ENCODE measurements at regions of chr11 and their contacts with region 1.

Region 1: DNA sequence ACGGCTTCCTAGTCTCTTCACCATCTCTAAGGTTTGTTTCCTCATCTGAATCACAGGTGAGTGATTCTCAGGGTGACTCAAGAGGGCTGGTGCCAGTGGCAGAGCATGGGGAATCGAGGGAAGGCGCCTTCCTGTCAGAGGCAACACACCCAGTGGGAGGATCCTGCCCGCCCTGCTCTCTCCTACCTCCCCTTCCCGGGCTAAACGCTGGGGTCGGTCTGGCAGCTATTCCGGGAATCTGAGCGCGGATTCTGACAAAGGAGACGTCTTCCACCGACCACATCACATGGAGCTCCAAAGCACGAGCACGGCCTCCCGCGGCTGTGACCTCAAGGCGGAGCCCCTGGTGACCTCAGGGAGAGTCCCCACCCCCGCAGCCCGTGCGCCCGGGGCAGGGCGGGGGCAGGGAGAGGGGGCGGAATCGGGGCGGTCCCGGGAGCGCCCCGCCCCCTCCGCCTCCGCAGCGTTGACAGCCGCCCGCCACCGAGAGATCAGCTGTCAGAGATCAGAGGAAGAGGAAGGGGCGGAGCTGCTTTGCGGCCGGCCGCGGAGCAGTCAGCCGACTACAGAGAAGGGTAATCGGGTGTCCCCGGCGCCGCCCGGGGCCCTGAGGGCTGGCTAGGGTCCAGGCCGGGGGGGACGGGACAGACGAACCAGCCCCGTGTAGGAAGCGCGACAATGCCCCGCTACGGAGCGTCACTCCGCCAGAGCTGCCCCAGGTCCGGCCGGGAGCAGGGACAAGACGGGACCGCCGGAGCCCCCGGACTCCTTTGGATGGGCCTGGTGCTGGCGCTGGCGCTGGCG is at the start of gene SMPD1:
- DNase-seq: peak; percentile 92
- ATAC-seq: peak; percentile 86
- H3K4me3 Mint-ChIP-seq: peak within 1 kb of the TSS; percentile 96
- H3K27ac Mint-ChIP-seq: peak within 1 kb of the TSS; percentile 95
- H3K4me1 Mint-ChIP-seq: peaks cover 39% of the 10 kb centered on the region
- H3K27me3 Mint-ChIP-seq: no peaks in the 10 kb centered on the region
- total RNA-seq, gene SMPD1: 40.7 to 42.6 TPM

Region 2: DNA sequence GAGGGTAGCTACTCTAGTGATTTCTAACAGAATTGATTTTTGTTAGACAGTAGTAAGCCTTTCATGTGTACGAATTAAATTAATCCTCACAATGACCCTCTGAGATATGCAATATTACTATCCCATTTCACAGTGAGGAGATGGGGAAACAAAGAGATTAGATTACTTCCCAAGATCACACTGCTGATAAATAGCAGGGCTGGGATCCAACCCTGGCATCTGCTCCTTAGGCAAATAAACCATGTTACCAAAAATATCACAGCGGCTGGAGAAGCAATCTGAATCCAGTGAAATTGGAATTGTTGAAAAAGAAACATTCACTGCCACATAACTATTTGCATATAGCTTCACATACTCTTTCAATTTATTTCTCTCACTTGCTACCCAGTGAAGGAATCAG is 57.0 kb before region 1 on chr11:
- POLR2A ChIA-PET with region 1: no interaction called
- DNase-seq: no peak
- ATAC-seq: no peak
- H3K4me3 Mint-ChIP-seq: no peak overlapping the region
- H3K27ac Mint-ChIP-seq: no peak overlapping the region
- H3K4me1 Mint-ChIP-seq: no peaks in the 10 kb centered on the region
- H3K27me3 Mint-ChIP-seq: peaks cover 32% of the 10 kb centered on the region

Region 3: DNA sequence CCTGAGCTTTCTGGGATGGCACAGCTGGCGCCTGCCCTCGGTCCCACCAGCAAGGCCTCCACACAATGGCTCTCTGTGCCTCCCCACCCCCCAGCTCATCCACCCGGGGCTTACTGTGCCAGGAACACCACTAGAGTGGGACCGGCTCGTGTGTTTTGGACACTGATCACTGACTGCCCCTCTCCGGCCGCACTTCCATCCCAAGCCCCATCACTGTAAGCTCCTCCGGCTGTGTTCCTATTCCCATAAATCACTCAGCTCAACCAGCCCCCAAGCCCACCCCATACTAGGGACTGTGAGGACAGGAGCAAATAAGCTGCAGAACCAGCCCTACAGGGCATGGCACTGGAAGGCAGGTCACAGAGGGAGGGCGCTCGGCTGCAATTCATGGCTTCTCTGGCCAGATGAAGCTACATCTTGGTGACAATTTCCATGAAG is 21.5 kb after region 1 on chr11:
- POLR2A ChIA-PET with region 1: interaction called, 10 read pairs
- DNase-seq: no peak
- ATAC-seq: no peak
- H3K4me3 Mint-ChIP-seq: no peak overlapping the region
- H3K27ac Mint-ChIP-seq: no peak overlapping the region
- H3K4me1 Mint-ChIP-seq: peaks cover 21% of the 10 kb centered on the region
- H3K27me3 Mint-ChIP-seq: no peaks in the 10 kb centered on the region

Region 4: GRCh38 chr11:6419009-6419631 is 29.0 kb after region 1 on chr11 and contains the start of gene APBB1:
- POLR2A ChIA-PET with region 1: interaction called, 29 read pairs
- DNase-seq: peak; percentile 87
- ATAC-seq: peak; percentile 64
- H3K4me3 Mint-ChIP-seq: peak within 1 kb of the TSS; percentile 76
- H3K27ac Mint-ChIP-seq: peak within 1 kb of the TSS; percentile 43
- H3K4me1 Mint-ChIP-seq: peaks cover 7% of the 10 kb centered on the region
- H3K27me3 Mint-ChIP-seq: peaks cover 32% of the 10 kb centered on the region
- total RNA-seq, gene APBB1: 64.0 to 69.2 TPM